Left cardiac atrium (tissue), 4 donors: ENCODE measurements at regions of chr20 and their contacts with region 1.

Region 1: GRCh38 chr20:40741507-40742106 is 52.6 kb upstream of the MAFB start:
- DNase-seq: peak; percentile 38
- ATAC-seq: peak in 1 of 2 donors; percentile 34

Region 2: GRCh38 chr20:40945754-40946450 is 204.3 kb after region 1 on chr20:
- intact Hi-C with region 1: loop called in 1 of 2 experiments (anchors 5 kb)
- DNase-seq: peak; percentile 72
- ATAC-seq: peak; percentile 90 to 93